ENCODE measurements at regions of chr12 and their contacts with region 1.

Region 1: GRCh38 chr12:107817250-107817649 is 42.7 kb downstream of the ASCL4 start:
- DNase-seq: no peak
- H3K4me3 ChIP-seq: no peak overlapping the region
- H3K27ac ChIP-seq: no peak overlapping the region
- H3K4me1 ChIP-seq: no peaks in the 10 kb centered on the region
- H3K27me3 ChIP-seq: no peaks in the 10 kb centered on the region
- CTCF ChIP-seq: no peak
- POLR2A ChIP-seq: no peak

Region 2: DNA sequence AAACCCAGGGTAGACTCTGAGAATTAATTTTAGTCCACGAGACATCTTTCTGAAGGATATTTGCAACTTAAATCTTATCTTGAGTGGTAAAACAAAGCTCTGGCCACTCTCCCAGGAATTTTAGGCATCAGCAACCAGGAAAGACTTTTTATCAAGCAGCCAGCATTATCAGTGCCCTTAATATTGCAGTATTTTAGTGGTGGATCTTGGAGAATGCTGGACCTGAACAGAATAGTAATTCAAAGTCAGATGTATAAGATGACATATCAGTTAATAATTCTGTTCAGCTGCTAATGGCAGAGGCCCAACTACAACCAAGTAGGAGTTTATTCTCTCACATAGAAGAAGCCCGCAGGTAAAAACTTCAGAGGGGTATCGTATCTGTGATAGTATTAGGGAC is 664.9 kb before region 1 on chr12:
- intact Hi-C with region 1: no loop called
- DNase-seq: no peak
- H3K4me3 ChIP-seq: no peak overlapping the region
- H3K27ac ChIP-seq: no peak overlapping the region
- H3K4me1 ChIP-seq: no peaks in the 10 kb centered on the region
- H3K27me3 ChIP-seq: no peaks in the 10 kb centered on the region
- CTCF ChIP-seq: no peak
- POLR2A ChIP-seq: no peak

Region 3: DNA sequence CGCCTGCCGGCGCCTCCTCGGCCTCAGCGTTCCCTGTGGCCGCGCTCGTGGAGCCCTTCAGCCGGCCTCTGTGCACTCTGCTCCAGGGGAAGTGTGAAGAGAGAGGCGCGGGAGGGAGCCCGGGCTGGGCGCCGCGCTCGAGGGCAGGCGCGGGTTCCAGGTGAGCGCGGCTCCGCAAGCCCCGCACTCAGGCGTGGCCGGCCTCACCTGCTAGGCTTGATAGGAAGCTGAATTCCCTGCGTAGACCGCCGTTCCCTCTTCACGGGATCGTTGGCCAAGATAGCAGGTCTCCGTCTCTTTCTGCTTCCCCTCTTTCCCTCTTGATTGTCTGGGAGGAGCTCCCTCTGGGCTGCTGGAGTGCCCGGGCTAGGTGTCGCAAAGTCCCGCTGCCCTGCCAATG is 47.0 kb after region 1 on chr12:
- intact Hi-C with region 1: loop called (anchors 2 kb)
- DNase-seq: no peak
- H3K4me3 ChIP-seq: peak overlapping the region; percentile 33 to 61 (median 44)
- H3K27ac ChIP-seq: no peak overlapping the region
- H3K4me1 ChIP-seq: no peaks in the 10 kb centered on the region
- H3K27me3 ChIP-seq: no peaks in the 10 kb centered on the region
- CTCF ChIP-seq: no peak
- POLR2A ChIP-seq: no peak

Region 4: DNA sequence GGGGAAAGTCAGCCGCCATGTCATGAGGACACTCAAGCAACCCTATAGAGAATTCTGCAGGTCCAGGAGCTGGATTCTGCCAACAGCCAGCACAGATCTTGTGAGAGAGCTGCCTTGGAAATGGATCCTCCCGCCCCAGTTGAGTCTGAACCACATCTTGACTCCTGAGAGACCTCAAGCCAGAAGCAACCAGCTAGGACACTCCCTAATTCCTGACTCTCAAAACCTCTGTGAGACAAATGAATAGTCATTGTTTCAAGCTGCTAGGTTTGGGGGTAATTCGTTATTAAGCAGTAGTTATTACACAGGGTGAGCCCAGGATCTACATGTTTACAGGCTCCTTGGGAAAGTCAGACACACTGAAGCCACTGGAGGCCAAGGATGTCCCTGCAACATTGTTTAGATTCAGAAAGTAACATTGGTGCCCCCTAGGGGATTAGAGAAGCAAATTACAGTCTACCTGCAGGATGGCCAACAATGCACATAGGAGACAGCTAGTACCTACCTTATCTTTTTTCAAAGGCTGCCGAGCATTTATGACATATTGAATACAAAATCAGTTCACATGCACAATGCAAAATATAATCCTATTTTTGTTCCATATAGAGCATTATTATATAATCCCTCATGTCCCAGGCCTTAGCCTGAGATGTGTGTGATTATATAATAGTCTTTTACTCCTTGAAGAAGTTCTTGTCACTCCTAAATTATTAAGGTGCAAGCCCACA is 639.9 kb after region 1 on chr12:
- intact Hi-C with region 1: no loop called
- DNase-seq: no peak
- H3K4me3 ChIP-seq: no peak overlapping the region
- H3K27ac ChIP-seq: peak overlapping the region; percentile 14 to 32
- H3K4me1 ChIP-seq: no peaks in the 10 kb centered on the region
- H3K27me3 ChIP-seq: peaks cover 0 to 3% of the 10 kb centered on the region in 2 donors
- CTCF ChIP-seq: peak in 2 of 3 donors; percentile 34 to 60
- POLR2A ChIP-seq: no peak